ENCODE measurements at regions of chr10 and their contacts with region 1.

Region 1: DNA sequence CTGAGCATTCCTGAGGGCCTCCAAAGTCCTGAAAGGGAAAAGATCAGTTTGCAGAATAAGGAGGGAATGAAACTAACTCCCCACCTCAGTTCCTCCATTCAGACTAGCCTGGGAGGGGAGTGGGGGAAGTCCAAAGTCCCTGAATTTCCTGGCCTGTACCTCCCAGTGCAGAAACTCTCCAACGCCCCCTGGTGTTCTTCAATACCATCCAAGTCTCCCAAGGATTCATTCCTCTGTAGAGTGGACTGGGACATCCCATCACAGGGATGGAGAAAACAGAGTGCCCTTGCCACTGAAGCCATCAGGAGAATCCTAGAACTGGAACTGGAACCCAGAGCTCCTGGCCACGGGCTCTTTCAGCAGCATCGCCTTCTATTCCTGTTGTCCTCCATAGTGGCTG is 1.6 kb upstream of the COL13A1 start:
- DNase-seq: peak; percentile 18
- H3K4me3 ChIP-seq: no peak overlapping the region
- H3K27ac ChIP-seq: no peak overlapping the region
- H3K4me1 ChIP-seq: no peaks in the 10 kb centered on the region
- CTCF ChIP-seq: peak; percentile 79

Region 2: DNA sequence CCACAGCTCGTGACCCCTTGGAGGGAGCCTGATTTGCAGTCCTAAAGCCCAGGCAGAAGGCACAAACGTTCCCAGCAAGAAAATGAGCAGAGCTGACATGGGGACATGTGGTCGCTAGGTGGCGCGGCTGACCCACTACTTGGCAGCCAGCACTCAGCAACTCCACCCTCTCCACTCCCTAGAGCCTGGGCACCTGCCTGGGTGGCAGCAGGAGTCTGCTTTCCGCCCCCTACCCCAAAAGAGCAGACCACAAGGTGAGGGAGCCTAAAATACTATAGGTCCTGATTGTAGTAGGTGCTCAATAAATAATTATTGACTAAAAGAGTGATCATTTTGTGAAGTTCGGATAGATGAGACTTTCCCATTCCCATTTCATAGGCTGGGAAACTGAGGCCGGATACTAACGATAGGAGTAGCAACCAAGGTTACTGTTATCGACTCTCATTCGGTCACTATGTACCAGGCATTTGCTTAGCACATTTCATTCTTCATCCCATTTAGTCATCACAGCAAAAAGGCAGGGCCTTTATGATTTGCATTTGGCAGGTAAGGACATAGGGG is 284.3 kb before region 1 on chr10:
- CTCF ChIA-PET with region 1: no interaction called
- POLR2A ChIA-PET with region 1: no interaction called
- intact Hi-C with region 1: loop called (anchors 5 kb)
- DNase-seq: peak; percentile 70
- H3K4me3 ChIP-seq: no peak overlapping the region
- H3K27ac ChIP-seq: no peak overlapping the region
- H3K4me1 ChIP-seq: no peaks in the 10 kb centered on the region
- CTCF ChIP-seq: peak; percentile 87

Region 3: DNA sequence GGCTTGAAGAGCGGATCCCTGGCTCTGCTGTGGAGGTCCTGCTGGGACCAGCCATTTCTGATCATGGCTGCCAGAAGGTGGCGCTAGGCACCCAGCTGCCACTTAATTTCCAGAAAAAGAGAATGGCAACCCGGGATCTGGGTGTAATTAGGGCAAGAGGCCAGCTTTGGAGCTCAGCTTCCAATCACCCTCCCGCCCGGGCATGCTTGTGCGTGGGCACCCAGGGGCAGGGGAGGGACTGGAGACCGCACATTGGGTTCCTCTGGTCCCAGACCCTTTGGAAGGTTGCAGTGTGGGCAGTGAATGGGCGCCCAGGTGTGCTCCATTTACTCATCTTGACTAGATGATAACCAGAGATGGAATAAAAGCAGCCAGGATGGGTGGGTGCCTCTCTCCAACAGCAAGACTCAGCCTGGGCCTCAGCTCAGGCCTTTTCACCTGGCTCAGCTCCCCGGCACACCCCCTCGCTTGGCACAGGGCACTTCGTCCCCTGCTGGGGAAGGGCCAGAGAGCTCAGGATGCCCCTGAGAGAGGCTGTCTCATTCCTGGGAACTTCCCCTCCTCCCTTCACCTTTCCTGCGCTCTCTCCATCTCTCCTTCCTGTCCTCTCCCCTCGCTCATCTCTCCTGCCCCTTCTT is 155.3 kb before region 1 on chr10:
- CTCF ChIA-PET with region 1: no interaction called
- POLR2A ChIA-PET with region 1: no interaction called
- intact Hi-C with region 1: loop called (anchors 2 kb)
- DNase-seq: peak; percentile 39
- H3K4me3 ChIP-seq: no peak overlapping the region
- H3K27ac ChIP-seq: no peak overlapping the region
- H3K4me1 ChIP-seq: no peaks in the 10 kb centered on the region
- CTCF ChIP-seq: peak; percentile 87

Region 4: GRCh38 chr10:69749178-69750010 is 50.7 kb before region 1 on chr10:
- CTCF ChIA-PET with region 1: no interaction called
- POLR2A ChIA-PET with region 1: no interaction called
- intact Hi-C with region 1: no loop called
- DNase-seq: no peak
- H3K4me3 ChIP-seq: no peak overlapping the region
- H3K27ac ChIP-seq: no peak overlapping the region
- H3K4me1 ChIP-seq: no peaks in the 10 kb centered on the region
- CTCF ChIP-seq: no peak

Region 5: GRCh38 chr10:69908124-69908523 is 108.0 kb after region 1 on chr10:
- CTCF ChIA-PET with region 1: interaction called, 17 read pairs
- POLR2A ChIA-PET with region 1: no interaction called
- intact Hi-C with region 1: no loop called
- DNase-seq: no peak
- H3K4me3 ChIP-seq: no peak overlapping the region
- H3K27ac ChIP-seq: no peak overlapping the region
- H3K4me1 ChIP-seq: no peaks in the 10 kb centered on the region
- CTCF ChIP-seq: no peak